Colonic mucosa (tissue), 4 donors: ENCODE measurements at regions of chr1 and their contacts with region 1.

Region 1: GRCh38 chr1:226945106-226945857 is 5.2 kb downstream of the COQ8A start:
- DNase-seq: peak; percentile 85
- H3K4me3 ChIP-seq: no peak overlapping the region
- H3K27ac ChIP-seq: peak overlapping the region; percentile 74
- H3K4me1 ChIP-seq: peaks cover 38% of the 10 kb centered on the region
- H3K27me3 ChIP-seq: no peaks in the 10 kb centered on the region
- CTCF ChIP-seq: no peak

Region 2: DNA sequence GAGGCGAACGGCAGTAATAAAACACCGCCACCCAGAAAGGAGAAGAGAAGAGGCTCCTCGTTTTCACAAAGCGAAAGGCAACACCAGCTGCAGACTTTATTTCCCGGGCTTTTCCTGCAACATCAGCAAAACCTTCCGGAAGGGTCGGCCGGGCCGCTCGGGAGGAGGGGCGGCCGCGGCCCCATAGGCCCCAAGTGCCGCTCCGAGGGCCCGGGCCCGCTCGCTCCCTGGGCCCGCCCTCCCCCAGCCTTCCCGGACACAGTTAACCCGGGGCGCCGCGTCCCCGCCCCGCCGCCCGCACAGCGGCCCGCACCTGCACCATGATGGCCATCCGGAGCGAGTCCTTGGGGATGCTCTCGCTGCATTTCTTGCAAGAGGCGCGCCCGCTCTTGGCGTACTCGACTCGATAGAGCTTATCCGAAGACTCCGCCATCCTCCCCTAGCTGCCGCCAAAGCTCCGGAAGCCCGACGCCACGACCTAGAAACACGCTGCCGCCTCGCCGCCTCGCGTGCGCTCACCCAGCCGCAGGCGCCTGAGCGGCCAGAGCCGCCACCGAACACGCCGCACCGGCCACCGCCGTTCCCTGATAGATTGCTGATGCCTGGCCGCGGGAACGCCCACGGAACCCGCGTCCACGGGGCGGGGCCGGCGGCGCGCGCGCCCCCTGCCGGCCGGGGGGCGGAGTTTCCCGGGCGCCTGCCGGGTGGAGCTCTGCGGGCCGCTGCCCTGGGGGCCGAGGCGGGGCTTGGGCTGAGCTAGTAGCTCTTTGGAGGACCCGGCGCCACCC is 537.6 kb before region 1 on chr1 and contains the start of gene PARP1:
- intact Hi-C with region 1: no loop called
- DNase-seq: peak; percentile 85
- H3K4me3 ChIP-seq: peak within 1 kb of the TSS; percentile 78
- H3K27ac ChIP-seq: peak within 1 kb of the TSS; percentile 90
- H3K4me1 ChIP-seq: peaks cover 13% of the 10 kb centered on the region
- H3K27me3 ChIP-seq: no peaks in the 10 kb centered on the region
- CTCF ChIP-seq: peak; percentile 63
- total RNA-seq, gene PARP1: 56.7 to 96.3 TPM

Region 3: DNA sequence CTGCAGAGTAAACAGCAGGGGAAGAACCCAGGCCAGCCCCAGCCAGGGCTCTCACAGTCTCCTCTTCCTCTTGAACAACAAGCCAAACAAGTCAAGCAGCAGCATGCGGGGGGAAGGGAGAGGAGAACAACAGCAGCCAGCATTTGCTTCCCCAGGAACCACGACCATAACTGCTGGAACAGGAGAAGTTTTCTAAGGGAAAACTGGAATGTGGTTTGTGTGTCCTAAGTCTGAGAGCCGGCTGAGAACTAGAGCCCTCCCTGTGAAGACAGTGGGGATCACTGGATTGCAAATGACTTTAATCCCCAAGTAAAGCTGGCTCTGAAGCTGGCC is 43.0 kb after region 1 on chr1:
- intact Hi-C with region 1: loop called (anchors 5 kb)
- DNase-seq: peak; percentile 88
- H3K4me3 ChIP-seq: no peak overlapping the region
- H3K27ac ChIP-seq: peak overlapping the region; percentile 87
- H3K4me1 ChIP-seq: peaks cover 16% of the 10 kb centered on the region
- H3K27me3 ChIP-seq: no peaks in the 10 kb centered on the region
- CTCF ChIP-seq: no peak